K562 (cell line): ENCODE measurements at regions of chr18 and their contacts with region 1.

Region 1: GRCh38 chr18:25239581-25240419 is 112.2 kb downstream of the ZNF521 start:
- DNase-seq: peak; percentile 40 to 69 (median 50)
- ATAC-seq: peak; percentile 74
- H3K4me3 ChIP-seq: no peak overlapping the region
- H3K27ac ChIP-seq: peak overlapping the region; percentile 22; the same call in 2 of the 3 replicates
- H3K4me1 ChIP-seq: peaks cover 0 to 10% of the 10 kb centered on the region in 2 experiments; a peak in 2 of 5 replicates
- H3K27me3 ChIP-seq: no peaks in the 10 kb centered on the region
- CTCF ChIP-seq: no peak
- EP300 ChIP-seq: peak; percentile 87
- POLR2A ChIP-seq: no peak
- RAD21 ChIP-seq: no peak

Region 2: DNA sequence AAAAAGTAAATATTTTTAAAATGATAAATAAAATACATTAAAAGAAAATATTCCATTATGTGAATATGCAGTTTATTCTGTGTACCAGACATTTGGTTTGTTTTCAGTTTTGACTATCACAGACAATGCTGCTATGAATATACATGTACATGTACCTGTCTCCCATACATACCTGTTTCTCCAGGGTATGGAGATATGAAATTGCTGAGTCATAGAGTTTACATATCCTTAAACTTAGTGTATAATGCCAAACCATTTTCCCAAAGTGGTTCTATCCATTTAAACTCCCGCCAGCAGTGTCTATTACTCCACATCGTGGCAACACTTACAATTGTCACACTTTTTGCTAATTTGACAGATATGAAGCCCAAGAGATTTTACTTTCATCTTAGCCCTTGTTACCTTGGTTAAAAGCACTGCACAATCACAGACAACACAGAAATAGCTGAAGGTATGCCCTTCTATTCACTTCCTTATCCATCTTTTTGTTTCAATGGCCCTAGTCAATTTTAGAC is 55.9 kb after region 1 on chr18:
- CTCF ChIA-PET with region 1: no interaction called
- POLR2A ChIA-PET with region 1: no interaction called
- in situ Hi-C with region 1: no loop called
- intact Hi-C with region 1: no loop called
- DNase-seq: no peak
- ATAC-seq: no peak
- H3K4me3 ChIP-seq: no peak overlapping the region
- H3K27ac ChIP-seq: no peak overlapping the region
- H3K4me1 ChIP-seq: no peaks in the 10 kb centered on the region
- H3K27me3 ChIP-seq: no peaks in the 10 kb centered on the region
- CTCF ChIP-seq: no peak
- EP300 ChIP-seq: no peak
- POLR2A ChIP-seq: no peak
- RAD21 ChIP-seq: no peak

Region 3: DNA sequence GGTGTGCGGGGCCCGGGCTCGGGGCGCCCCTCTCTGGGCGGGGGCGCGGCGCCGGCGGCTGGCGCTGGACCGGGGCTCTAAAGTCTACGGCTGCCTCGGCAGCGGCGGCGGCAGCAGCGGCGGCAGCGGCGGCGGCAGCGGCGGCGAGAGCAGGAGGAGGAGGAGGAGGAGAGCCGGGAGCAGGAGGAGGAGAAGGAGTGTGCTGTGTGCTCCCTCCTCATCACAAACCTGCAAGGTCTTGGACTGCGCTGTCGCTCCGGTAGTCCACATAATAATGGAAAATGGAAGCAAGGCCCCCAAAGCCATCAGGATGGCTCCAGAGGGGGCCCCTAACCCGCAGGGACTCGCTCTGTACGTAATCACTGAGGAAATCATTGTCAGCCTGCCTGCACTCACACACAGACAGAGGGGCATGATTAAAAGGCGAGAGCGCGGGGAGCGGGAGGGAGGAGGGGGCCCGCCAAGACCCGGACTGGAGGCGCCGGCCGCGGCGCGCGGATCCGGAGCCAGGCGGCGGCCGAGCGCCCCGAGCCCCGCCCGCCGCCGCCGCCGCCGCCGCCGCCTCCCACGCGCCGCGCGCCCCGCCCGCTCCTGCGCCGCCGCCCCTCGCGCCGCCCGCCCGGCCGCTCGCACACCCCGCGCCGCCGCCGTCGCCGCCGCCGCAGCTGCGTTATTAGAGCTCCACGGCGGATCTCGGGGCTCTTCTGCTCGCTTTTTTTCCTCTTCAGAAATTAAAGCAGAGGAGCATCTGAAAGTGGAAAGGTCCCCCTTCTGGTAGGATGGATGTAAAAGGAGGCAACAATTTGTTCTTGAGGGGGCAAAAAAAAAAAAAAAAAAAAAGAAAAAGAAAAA is 112.2 kb after region 1 on chr18 and contains the start of gene ZNF521:
- CTCF ChIA-PET with region 1: no interaction called
- POLR2A ChIA-PET with region 1: no interaction called
- in situ Hi-C with region 1: no loop called
- intact Hi-C with region 1: loop called (anchors 5 kb)
- DNase-seq: peak; percentile 90 to 92 (median 92)
- ATAC-seq: peak; percentile 99
- H3K4me3 ChIP-seq: peak within 1 kb of the TSS; percentile 50
- H3K27ac ChIP-seq: peak within 1 kb of the TSS; percentile 19; the same call in 1 of the 3 replicates
- H3K4me1 ChIP-seq: peaks cover 0 to 23% of the 10 kb centered on the region in 2 experiments; a peak in 1 of 5 replicates
- H3K27me3 ChIP-seq: peaks cover 0 to 4% of the 10 kb centered on the region in 2 experiments; a peak in 1 of 5 replicates
- CTCF ChIP-seq: peak in 1 of 3 experiments; percentile 30; a peak in 1 of 6 replicates
- EP300 ChIP-seq: no peak
- POLR2A ChIP-seq: no peak
- RAD21 ChIP-seq: no peak
- polyA plus RNA-seq, gene ZNF521: 1.2 to 1.6 TPM